Activated naive CD4-positive, alpha-beta T cell treated with anti-CD3 and anti-CD28 coated beads for 36 hours (primary cell): ENCODE measurements at regions of chr7 and their contacts with region 1.

Region 1: DNA sequence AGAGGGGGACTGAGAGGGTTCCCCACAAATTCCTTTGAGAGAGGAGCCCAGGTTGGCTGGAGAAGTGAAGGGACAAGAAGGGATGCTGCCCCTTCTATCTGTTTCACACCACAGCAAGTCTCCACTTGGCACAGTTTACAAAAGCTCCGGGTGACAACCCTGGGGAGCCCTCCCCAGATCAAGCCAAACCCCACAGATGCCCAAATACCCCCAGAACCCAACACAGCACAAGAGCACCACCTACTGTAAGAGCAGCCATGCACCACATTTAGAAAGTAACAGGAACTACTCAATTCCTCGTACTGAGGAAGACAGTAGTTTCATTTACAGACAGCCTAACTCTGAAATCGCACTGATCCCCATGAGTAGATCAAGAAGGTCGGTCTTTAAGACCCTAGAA is 67.8 kb upstream of the ATP6V0A4 start:
- DNase-seq: peak; percentile 67
- H3K4me3 Mint-ChIP-seq: no peak overlapping the region
- H3K27ac Mint-ChIP-seq: no peak overlapping the region
- H3K4me1 Mint-ChIP-seq: peaks cover 19% of the 10 kb centered on the region
- H3K27me3 Mint-ChIP-seq: no peaks in the 10 kb centered on the region

Region 2: DNA sequence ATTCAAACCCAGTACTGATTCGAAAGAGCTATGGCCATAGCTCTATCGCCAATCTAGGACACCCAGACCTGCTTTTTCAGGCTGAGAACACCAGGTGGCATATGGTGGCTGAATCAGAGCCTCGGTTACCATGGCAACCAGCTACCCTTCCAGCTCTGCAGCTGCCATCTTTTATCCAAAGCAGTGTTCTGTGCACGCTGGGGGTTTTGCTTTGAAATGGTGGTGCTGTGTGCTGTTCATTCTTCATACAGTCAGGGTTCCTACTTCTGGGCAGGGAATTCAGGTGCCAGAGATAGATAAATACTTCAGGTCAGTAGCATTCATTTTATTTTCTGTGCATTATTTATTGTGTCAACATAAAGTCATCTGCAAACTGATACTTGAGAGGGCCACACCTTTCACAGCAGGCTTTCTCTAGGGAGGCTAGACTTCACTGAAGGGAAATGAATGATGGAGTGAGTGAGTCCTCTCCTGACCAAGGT is 704.2 kb before region 1 on chr7:
- CTCF ChIA-PET with region 1: no interaction called
- intact Hi-C with region 1: loop called (anchors 1 kb)
- DNase-seq: peak; percentile 88
- H3K4me3 Mint-ChIP-seq: no peak overlapping the region
- H3K27ac Mint-ChIP-seq: no peak overlapping the region
- H3K4me1 Mint-ChIP-seq: no peaks in the 10 kb centered on the region
- H3K27me3 Mint-ChIP-seq: no peaks in the 10 kb centered on the region

Region 3: DNA sequence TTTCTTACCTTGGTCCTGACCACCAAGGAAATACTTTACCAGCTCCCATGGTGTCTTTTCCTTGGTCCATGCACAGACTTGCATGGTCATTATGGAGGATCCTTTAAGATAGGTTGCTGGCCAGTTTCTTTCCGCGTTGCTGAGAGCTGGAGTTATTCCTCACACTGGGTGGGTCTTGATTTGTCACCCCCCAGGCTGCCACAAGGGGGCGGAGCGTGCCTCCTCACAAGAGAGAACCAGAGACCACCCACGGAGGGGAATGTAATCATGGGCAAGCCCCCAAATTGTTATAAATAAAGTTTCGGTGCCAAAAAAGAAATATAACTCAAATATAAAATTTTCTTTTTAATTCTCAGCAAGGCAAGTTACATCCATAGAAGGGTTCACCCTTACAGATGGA is 416.3 kb before region 1 on chr7:
- CTCF ChIA-PET with region 1: no interaction called
- intact Hi-C with region 1: loop called (anchors 1 kb)
- DNase-seq: peak; percentile 49
- H3K4me3 Mint-ChIP-seq: no peak overlapping the region
- H3K27ac Mint-ChIP-seq: no peak overlapping the region
- H3K4me1 Mint-ChIP-seq: no peaks in the 10 kb centered on the region
- H3K27me3 Mint-ChIP-seq: no peaks in the 10 kb centered on the region

Region 4: DNA sequence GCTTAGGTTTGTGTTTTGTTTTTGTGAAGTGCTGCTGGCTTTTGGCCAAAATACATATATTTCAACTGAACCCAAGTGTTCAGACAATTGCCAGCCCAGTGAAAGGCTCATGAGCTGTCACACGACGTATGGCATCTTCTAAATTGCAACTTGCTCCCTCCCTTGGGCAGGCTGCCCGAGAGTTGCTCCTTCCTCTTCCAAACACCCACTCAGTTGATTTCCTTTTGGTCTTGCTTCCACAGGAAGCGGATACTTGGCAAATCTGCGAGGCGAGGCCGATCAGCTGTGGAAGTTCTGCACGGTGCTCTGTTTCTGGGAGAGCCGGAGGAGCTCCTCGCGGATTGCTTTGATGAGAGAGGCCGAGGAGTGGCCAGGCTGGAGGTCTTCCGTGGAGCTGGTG is 28.2 kb before region 1 on chr7:
- CTCF ChIA-PET with region 1: no interaction called
- intact Hi-C with region 1: no loop called
- DNase-seq: no peak
- H3K4me3 Mint-ChIP-seq: no peak overlapping the region
- H3K27ac Mint-ChIP-seq: no peak overlapping the region
- H3K4me1 Mint-ChIP-seq: no peaks in the 10 kb centered on the region
- H3K27me3 Mint-ChIP-seq: peaks cover 6% of the 10 kb centered on the region

Region 5: DNA sequence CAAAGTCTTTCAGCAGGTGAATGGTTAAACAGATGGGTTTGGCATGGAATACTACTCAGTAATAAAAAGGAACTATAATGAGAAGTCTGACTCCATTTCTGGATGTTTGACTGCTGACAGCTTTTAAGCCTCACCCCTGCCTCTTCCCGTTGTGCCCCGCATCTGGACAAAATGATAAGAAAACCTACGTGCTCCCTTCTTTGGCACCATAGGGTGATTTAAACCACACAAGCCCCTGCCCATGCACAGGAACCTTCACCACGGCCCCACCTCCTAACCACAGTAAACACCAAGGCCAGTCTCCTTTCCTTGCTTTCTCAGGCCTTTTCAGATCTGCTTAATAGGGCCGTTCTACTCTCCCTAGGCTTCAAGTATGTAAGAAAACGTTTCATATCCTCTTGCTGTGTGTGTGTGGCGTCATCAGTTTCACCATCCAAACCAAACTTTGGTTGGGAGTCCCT is 318.1 kb after region 1 on chr7:
- CTCF ChIA-PET with region 1: no interaction called
- intact Hi-C with region 1: no loop called
- DNase-seq: no peak
- H3K4me3 Mint-ChIP-seq: no peak overlapping the region
- H3K27ac Mint-ChIP-seq: no peak overlapping the region
- H3K4me1 Mint-ChIP-seq: no peaks in the 10 kb centered on the region
- H3K27me3 Mint-ChIP-seq: no peaks in the 10 kb centered on the region